ENCODE measurements at regions of chr10 and their contacts with region 1.

Region 1: DNA sequence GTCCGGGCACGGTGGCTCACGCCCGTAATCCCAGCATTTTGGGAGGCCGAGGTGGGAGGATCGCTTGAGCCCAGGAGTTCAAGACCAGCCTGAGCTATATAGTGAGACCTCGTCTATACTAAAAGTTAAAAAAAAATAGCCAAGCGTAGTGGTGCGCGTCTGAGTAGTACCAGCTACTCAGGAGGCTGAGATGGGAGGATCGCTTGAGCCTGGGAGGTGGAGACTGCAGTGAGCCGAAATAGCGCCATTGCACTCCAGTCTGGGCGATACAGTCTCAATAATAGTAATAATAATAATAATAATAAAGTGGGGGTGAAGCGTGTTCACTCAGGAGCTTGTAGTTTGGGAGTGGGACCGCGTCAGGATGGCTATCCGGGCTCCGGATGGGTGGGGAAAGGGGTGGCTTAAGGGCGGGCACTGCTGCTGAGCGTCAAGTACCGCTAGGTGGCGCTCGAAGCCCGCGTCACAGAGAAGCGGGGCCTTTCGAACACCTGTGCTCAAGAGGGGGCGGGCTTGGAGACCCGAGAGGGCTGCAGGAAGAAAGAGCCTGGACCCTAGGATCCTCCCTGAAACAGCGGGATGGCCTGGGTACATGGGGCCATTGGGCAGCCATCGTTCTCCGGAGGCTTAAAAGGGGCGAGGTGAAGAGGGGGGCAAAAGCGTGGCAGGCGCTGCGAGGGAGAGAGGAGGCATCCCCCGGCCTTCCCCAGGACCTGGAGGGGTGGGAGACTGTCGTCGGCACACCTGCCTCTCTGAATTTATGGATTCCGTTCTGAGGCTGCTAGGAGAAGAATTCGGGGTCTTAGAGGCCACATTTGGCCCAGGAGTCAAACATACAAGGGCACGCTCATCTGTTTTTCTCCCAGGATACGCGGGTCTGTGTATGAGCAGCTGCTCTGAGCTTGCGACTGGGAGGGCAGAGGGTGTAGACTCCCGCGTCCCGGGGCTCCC is 14.5 kb downstream of the LBX1 start:
- DNase-seq: no peak
- H3K4me3 ChIP-seq: no peak overlapping the region
- CTCF ChIP-seq: peak; percentile 82

Region 2: GRCh38 chr10:101195921-101196320 is 18.8 kb before region 1 on chr10:
- CTCF ChIA-PET with region 1: interaction called, 19 read pairs
- POLR2A ChIA-PET with region 1: no interaction called
- DNase-seq: no peak
- H3K4me3 ChIP-seq: no peak overlapping the region
- CTCF ChIP-seq: no peak

Region 3: DNA sequence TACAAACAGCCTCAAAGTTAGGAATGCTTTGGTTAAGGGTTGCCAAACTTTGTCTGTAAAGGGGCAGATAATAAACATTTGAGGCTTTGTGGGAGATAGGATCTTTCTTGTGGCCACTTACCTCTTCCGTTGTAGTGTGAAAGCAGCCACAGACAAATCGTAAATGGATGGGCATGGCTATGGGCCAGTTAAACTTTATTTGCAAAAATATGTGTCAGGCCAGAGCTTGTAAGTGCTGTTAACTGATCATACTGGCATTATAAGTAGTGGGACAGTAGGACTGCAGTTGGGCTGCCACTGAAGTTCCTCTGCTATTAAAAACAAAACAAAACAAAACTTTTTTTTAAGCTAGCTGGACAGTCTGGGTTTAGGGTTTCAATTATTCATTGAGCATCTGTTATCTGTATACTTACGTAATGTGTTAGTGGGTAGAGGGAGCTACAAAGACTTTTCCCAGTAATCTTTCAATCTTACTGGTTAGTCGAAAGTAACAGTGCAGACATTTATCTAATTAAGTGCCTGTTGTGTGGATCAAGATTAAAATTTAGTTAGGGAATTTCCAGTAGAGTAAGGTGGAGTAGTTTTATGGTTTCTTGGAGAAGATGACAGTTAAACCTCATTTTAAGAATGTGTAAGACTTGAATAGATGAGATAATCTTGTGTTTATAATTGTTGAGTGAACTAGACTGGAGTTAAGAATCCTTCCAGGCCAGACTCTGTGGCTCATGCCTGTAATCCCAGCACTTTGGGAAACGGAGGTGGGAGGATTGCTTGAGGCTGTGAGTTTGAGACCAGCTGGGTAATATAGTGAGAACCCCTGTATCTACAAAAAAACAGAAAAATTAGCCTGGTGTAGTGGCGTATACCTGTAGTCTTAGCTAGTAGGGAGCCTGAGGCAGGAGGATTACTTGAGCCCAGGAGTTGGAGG is 239.3 kb after region 1 on chr10:
- CTCF ChIA-PET with region 1: interaction called, 10 read pairs
- POLR2A ChIA-PET with region 1: no interaction called
- DNase-seq: no peak
- H3K4me3 ChIP-seq: no peak overlapping the region
- CTCF ChIP-seq: no peak

Region 4: DNA sequence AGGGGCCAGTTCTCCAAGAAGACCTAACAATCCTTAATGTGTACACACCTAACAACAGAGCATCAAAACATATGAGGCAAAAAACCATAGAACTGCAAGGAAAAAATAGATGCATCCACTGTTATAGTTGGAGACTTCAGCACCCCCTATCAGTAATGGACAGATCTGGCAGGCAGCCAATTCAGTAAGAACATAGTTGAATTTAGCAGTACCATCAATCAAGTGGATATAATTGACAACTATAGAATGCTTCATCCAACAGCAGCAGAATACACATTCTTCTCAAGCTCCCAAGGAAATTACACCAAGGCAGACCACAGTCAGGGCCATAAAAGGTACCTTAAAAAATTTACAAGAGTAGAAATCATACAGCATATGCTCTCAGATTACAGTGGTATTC is 331.2 kb after region 1 on chr10:
- CTCF ChIA-PET with region 1: interaction called, 12 read pairs
- POLR2A ChIA-PET with region 1: no interaction called
- DNase-seq: no peak
- H3K4me3 ChIP-seq: no peak overlapping the region
- CTCF ChIP-seq: no peak

Region 5: DNA sequence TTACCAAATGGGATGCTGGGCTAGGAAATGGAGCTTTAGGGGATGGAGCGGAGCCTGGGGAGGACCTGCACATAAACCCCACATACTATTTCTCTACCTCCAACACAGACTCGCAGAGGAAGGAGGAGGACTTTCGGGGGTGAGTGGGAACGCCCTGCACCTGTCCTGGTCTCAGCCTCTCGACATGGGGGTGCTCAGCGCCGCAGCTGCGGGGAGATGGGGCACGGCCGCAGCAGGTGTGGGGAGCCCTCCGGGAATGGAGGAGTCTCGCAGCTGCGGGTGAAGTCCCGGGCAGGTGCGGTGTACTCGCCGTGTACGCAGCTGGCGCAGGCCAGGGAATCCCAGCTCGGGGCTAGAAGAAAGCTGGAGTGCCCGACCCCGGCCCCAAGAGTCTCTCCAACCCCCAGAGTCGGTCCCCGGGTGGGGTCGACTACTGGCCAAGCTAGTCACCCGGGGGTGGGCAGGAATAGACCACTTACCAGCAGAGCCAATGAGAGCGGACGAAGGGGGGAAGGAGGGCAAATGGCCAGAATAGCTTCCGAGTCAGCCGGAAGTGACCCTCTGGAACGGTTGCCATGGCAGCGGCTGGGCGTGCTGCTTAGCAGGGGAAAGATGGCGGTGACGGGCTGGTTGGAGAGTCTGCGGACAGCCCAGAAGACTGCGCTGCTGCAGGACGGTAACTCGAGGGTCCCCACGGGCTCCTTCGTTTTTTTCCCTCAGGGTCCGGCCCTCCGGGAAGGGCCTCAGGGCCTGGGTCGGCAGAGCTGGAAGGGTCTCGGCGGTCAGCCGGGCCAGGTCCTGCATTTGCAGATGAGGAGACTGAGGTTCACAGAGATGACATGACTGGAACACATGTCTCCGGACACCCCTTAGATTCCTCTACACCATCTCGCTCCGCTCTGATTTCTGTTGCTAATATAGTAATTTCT is 373.3 kb after region 1 on chr10 and contains the starts of genes DPCD and POLL:
- CTCF ChIA-PET with region 1: interaction called, 19 read pairs
- POLR2A ChIA-PET with region 1: no interaction called
- DNase-seq: peak; percentile 62
- H3K4me3 ChIP-seq: peak within 1 kb of the TSS; percentile 99
- CTCF ChIP-seq: no peak

Region 6: DNA sequence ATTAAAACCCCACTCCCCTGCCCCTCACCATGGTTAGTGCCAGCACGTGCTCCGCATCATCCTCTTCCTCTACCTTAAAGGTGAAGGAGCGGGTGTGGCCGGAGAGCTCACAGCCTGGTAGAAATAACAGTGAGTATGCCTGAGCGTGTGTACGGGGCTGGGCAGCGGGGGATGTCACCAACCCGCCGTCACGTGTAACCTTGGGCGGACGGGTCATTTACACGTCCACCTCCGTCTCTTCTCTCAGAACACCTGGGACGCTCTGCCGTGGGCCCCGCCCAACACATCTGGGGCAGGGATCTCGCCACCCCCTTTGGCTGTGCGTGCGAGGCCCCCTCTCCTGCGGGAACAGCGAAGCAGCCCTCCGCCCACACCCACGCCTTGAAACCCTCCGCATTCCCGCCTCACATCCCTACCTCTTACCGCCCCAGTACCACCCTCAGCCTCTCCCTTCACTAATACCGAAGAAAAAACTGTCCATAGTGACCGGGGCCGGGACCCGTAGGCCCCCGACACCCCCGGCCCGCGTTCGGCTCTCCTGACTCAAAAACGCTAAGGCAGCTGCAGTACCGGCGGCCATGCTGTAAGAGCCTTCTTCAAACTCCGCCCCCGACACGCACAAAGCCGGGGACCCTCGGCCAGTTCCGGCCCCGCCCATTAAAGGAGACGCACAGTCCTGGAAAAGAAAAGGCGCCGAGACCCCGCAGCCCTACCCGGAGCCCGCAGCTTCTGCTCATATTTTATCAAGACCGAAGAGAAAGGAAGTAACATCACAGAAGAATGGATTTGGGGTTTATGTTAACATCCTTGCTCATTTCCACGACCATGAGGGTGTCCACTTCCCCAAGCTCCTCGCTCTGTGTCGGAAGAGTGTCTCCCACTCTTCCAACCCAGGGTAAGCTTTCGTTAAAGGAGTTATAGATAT is 568.4 kb after region 1 on chr10 and contains the start of gene NPM3:
- CTCF ChIA-PET with region 1: interaction called, 182 read pairs
- POLR2A ChIA-PET with region 1: no interaction called
- DNase-seq: no peak
- H3K4me3 ChIP-seq: peak within 1 kb of the TSS; percentile 84
- CTCF ChIP-seq: no peak